BJ (cell line): ENCODE measurements at regions of chr1 and their contacts with region 1.

Region 1: DNA sequence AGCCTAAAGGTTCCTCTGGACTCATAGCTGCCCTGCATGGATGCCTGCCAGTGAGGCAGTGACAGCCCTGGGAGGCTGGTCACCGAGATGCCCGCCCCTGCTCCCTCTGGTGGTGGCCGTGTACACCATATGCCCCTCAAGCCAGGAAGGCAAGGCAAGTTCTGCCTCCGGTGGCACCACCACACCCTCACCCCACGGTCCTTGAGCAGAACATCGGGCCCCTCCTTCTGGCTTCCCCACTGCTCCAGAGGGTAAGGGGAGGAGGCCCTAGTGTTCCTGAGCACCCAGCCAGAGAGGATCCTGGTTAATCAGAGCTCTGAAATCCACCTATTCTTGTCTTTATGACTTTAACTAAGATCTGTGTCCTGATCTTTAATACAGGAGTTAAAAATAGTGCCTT is 1.6 kb upstream of the S100A14 start:
- DNase-seq: no peak
- H3K4me3 ChIP-seq: no peak overlapping the region
- H3K27me3 ChIP-seq: no peaks in the 10 kb centered on the region
- CTCF ChIP-seq: peak; percentile 89

Region 2: DNA sequence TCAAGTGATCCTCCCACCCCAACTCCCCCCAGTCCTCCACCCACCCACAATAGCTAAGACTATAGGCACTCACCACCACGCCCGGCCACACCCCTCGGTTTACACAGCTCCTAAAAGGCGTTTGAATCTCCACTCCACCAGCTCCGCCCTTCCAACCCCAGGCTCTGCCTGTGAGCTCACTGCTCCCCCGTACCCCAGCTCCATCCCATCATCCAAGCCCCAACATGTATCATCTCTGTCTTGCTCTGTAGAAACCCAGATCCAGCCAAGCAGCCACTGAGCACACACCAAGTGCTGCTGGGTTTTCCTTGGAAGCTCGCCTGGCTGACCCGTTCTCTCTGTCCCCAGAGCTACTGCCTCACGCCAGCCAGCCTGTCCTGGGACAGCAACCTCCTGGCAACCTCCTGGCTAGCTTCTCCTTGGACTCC is 40.0 kb before region 1 on chr1:
- CTCF ChIA-PET with region 1: interaction called, 194 read pairs
- POLR2A ChIA-PET with region 1: no interaction called
- DNase-seq: no peak
- H3K4me3 ChIP-seq: no peak overlapping the region
- H3K27me3 ChIP-seq: no peaks in the 10 kb centered on the region
- CTCF ChIP-seq: no peak

Region 3: DNA sequence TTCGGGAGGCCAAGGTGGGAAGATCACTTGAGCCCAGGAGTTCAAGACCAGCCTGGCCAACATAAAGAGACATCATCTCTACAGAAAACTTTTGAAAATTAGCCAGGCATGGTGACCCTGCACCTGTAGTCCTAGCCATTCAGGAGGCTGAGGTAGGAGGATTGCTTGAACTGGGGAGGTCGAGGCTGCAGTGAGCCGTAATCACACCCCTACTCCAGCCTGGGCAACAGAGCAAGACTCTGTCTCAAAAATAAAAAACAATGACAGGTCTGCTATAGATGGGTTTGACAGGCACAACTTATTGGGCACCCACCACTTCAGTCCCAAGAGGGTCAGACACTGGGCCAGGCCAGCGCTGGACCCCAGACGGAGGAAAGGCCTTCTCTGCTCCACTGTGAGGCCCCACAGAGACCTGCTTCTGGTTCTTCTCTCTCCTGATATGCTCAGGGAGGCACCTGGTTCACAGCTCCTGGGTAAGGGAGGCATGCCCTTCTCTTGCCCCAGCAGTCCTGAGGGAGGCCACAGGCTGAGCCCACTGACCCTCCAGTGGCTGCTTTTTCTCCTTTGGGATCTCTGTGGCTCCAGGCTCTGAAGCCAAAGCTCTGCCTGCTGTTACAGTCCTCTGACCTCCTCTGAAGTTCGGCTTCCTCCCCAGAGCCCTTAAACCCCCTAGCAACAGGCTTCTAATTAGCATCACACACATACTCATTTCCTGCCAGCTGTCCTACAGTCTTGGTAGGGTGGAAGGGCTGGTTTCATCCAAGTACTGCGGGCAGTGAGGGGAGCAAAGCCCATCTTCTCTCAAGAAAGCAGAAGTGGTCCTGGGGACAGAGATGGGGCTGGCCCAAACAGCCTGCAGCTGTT is 19.1 kb before region 1 on chr1:
- CTCF ChIA-PET with region 1: interaction called, 20 read pairs
- POLR2A ChIA-PET with region 1: no interaction called
- DNase-seq: no peak
- H3K4me3 ChIP-seq: no peak overlapping the region
- H3K27me3 ChIP-seq: no peaks in the 10 kb centered on the region
- CTCF ChIP-seq: no peak

Region 4: GRCh38 chr1:153633716-153634665 is 16.3 kb after region 1 on chr1 and contains the start of gene CHTOP:
- CTCF ChIA-PET with region 1: interaction called, 148 read pairs
- POLR2A ChIA-PET with region 1: interaction called, 7 read pairs
- DNase-seq: peak; percentile 88
- H3K4me3 ChIP-seq: peak within 1 kb of the TSS; percentile 80
- H3K27me3 ChIP-seq: no peaks in the 10 kb centered on the region
- CTCF ChIP-seq: no peak; the same call in 1 of the 2 replicates
- polyA plus RNA-seq, gene CHTOP: 36.8 and 38.4 TPM in 2 replicates